AG04449 (cell line): ENCODE measurements at regions of chr2 and their contacts with region 1.

Region 1: DNA sequence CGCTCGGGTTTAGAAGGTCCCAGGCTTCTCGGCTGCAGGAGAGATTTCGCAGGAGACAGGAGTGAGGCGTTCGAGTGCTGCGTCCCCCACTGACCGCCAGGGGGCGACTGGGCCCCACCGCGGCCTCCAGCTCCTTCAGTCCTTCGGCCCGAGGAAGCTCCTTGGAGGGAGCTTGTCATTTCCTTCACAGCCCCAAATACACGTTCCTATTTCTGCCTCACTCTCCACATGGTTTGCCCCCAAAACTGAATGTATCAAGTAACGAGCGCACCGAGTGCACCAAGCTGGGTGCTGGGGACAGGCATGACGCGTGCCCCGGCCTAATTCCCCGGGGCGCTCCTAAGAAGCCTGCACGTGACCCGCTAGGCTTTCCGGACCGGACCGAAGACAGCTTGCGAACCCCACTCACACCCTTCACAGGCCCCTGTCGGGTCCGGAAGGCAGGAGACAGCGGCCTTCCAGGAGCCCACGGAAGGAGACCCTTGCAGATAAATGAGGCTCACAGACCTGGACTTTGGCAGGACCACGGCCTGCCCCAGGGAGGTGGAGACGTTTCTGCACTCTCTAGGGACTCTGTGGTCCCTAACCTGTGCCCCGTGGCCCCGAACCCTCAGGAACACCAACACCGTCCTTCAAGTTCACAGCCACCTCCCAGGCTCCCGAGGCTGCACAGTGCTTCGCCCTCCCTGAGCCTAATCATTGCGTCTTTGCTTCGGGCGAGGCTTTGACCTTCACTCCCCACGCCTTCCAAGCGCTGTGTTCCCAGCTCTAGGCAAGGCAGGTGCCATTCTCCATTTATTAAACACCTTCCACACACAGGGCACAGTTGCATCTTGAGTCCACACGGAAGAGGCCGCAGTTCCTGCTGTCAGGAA is 13.0 kb upstream of the FAHD2A start:
- DNase-seq: no peak
- H3K4me3 ChIP-seq: no peak overlapping the region
- CTCF ChIP-seq: peak; percentile 97

Region 2: DNA sequence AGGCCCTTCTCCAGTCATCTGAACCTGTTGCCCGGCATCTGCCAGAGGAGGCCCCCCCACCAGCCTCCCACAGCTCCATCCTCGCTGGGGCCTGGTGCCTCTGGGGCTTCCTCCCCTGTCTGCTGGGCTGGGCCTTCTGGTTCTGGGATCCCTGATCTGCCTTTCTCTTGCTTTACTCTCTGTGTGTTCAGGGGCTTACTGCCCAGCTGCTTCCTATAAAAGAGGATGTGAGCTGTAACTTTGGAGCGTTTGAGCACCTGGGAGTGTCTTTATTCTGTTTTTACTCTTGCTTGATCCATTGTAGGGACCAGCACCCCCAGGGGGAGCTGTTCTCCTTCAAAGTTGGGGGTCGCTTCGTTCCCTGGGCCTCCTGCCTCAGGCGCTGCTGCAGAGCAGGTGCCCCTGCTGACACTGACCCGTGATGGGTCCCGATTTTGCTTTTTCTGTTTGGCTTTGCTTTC is 10.1 kb before region 1 on chr2:
- CTCF ChIA-PET with region 1: interaction called, 54 read pairs
- POLR2A ChIA-PET with region 1: no interaction called
- DNase-seq: no peak
- H3K4me3 ChIP-seq: no peak overlapping the region
- CTCF ChIP-seq: no peak

Region 3: GRCh38 chr2:95402370-95403203 is 13.1 kb after region 1 on chr2 and contains the start of gene FAHD2A:
- CTCF ChIA-PET with region 1: interaction called, 54 read pairs
- POLR2A ChIA-PET with region 1: no interaction called
- DNase-seq: no peak
- H3K4me3 ChIP-seq: peak within 1 kb of the TSS; percentile 96
- CTCF ChIP-seq: no peak

Region 4: DNA sequence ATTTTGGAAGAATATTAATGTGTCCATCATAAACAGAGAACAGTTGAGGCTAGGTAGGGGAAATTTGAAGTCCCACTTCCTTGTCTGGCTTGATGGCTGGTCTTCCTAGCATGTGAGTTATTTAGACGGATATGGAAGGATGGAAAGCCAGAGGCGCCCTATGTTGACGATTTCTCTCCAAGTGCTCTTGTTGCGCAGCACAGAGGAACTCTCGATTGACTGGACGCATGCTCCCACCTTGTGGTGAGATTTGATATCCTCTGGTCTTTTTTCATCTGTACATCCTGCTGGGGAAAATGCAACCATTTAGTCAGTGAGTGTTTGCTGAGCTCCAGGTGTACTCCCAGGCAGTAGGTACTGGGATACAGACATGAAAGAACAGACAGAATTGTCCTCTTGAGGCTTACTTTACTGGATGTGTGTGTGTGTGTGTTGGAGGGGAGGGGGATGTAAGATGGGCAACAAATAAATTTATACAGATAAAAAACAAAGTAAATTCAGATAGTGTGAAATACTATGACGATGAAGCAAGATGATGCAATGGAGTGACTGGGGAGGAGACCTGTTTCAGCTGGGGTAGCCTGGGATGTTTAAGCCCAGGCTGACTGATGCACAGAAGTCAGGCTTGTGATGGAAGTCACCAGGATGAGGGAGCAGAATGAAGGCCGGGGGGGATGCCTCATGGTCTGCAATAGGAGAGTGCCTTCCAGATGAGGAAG is 339.6 kb after region 1 on chr2:
- CTCF ChIA-PET with region 1: interaction called, 74 read pairs
- POLR2A ChIA-PET with region 1: no interaction called
- DNase-seq: peak; percentile 59
- H3K4me3 ChIP-seq: no peak overlapping the region
- CTCF ChIP-seq: peak; percentile 60

Region 5: DNA sequence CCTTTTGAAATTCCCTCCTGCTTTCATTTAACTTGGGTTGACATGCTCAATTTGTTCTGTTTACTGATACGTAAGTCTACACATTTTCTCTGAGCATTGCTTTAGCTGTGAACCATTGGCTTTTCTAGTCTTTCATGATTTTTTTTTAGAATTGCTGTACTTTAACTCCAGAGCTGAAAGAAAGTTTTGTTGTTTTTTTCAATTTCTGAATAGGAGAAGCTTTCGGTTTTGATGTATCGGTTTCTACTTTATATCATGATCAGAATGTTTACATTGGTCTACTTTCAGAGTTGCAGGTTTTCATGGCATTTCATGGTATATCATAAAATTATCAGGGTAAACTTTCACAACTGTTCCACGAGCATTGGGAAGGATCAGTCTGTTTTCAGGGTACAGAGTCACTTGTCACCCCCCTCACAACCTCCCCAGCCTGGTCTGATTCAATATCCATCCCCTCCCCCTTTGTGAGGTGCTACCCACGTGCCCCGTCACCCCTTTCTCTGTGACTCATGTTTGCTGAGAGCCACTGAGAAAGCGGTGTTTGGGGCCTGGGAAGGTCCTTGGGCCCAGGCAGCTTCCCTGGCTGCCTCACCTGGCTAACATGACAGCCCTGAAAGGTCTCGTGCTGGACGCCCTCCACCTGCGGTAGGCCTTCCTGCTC is 741.8 kb after region 1 on chr2:
- CTCF ChIA-PET with region 1: no interaction called
- POLR2A ChIA-PET with region 1: no interaction called
- DNase-seq: no peak
- H3K4me3 ChIP-seq: no peak overlapping the region
- CTCF ChIP-seq: no peak